SK-N-SH (cell line): ENCODE measurements at regions of chr2 and their contacts with region 1.

Region 1: GRCh38 chr2:152175458-152176325 is at the start of gene STAM2:
- DNase-seq: peak; percentile 94
- H3K4me3 ChIP-seq: peak within 1 kb of the TSS; percentile 77 to 94
- H3K27ac ChIP-seq: peak within 1 kb of the TSS; percentile 92 to 97
- H3K4me1 ChIP-seq: peaks cover 0 to 6% of the 10 kb centered on the region in 2 experiments; a peak in 2 of 4 replicates
- H3K27me3 ChIP-seq: no peaks in the 10 kb centered on the region
- CTCF ChIP-seq: peak; percentile 93
- EP300 ChIP-seq: no peak; a peak in 1 of 4 replicates
- RAD21 ChIP-seq: peak; percentile 89
- polyA plus RNA-seq, gene STAM2: 6.9 and 10.1 TPM in 2 replicates

Region 2: GRCh38 chr2:152031747-152032306 is 143.9 kb before region 1 on chr2:
- CTCF ChIA-PET with region 1: interaction called, 44 read pairs
- POLR2A ChIA-PET with region 1: interaction called, 3 read pairs
- DNase-seq: no peak
- H3K4me3 ChIP-seq: no peak overlapping the region
- H3K27ac ChIP-seq: no peak overlapping the region
- H3K4me1 ChIP-seq: no peaks in the 10 kb centered on the region
- H3K27me3 ChIP-seq: no peaks in the 10 kb centered on the region
- CTCF ChIP-seq: no peak
- EP300 ChIP-seq: no peak
- RAD21 ChIP-seq: no peak

Region 3: GRCh38 chr2:152036611-152037469 is 138.9 kb before region 1 on chr2:
- CTCF ChIA-PET with region 1: interaction called, 44 read pairs
- POLR2A ChIA-PET with region 1: no interaction called
- DNase-seq: peak; percentile 66
- H3K4me3 ChIP-seq: no peak overlapping the region; a peak in 1 of 4 replicates
- H3K27ac ChIP-seq: no peak overlapping the region
- H3K4me1 ChIP-seq: no peaks in the 10 kb centered on the region; a peak in 1 of 4 replicates
- H3K27me3 ChIP-seq: no peaks in the 10 kb centered on the region
- CTCF ChIP-seq: peak; percentile 85
- EP300 ChIP-seq: no peak
- RAD21 ChIP-seq: peak; percentile 96

Region 4: DNA sequence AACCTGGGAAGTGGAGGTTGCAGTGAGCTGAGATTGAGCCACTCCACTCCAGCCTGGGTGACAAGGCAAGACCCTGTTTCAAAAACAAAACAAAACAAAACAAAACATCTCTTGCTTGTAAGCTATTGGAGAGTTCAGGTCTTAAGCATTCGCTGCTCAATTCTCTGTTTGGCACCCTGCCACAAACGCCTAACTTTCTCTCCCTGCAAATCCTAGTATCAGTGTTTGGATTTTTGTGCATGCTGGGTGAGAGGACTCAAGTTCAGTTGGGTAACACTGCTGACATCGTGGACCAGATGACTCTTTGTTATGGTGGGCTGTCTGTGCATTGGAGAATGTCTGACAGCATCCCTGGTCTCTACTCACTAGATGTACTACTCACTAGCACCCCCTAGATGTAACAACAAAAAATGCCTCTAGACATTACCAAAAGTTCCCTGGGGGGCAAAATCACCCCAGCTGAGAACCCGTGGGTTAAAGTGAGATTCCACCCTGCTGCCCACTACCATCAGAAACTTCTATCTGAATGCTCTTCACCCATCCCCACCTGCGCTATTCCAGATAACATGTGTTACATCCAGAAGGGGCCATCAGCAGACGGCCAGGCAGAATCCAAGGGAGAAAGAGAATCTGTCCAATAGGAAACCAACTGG is 127.7 kb before region 1 on chr2:
- CTCF ChIA-PET with region 1: interaction called, 12 read pairs
- POLR2A ChIA-PET with region 1: no interaction called
- DNase-seq: peak; percentile 21
- H3K4me3 ChIP-seq: no peak overlapping the region
- H3K27ac ChIP-seq: no peak overlapping the region
- H3K4me1 ChIP-seq: peaks cover 0 to 4% of the 10 kb centered on the region in 2 experiments; a peak in 2 of 4 replicates
- H3K27me3 ChIP-seq: peaks cover 12% of the 10 kb centered on the region
- CTCF ChIP-seq: peak; percentile 52
- EP300 ChIP-seq: no peak
- RAD21 ChIP-seq: no peak

Region 5: DNA sequence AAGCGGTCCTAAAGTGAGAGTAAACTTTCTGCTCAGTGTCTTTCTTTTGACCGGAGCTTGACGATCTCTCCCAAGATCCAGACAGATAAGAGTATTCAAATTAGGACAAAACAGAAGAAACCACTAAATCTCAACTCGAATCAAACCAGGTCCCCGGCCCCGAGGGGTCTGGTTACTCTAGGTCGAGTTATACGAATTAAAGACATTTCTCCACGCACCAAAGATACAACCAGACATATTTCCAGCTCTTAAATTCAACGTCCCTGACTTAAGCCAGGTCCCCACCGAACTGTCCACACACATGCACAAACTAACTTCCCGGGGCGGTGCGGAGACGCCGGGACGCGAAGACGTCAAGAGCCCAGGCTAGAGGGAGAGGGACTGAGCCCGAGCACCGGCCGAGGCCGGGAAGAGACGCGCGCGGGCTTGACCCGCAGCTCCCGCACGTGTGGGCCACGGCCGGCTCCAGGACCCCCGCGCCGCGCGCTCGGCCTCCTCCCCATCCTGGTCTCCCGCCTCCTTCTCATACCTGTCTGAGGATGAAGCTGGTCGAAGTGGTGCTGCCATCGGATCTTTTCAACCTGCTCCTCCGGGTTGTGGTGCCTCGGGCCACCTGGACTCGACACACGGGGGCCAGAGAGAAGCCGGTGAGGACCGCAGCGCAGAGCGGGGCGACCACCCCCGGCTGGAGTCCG is 77.7 kb before region 1 on chr2:
- CTCF ChIA-PET with region 1: no interaction called
- POLR2A ChIA-PET with region 1: no interaction called
- DNase-seq: no peak
- H3K4me3 ChIP-seq: peak overlapping the region; percentile 49 to 61
- H3K27ac ChIP-seq: no peak overlapping the region
- H3K4me1 ChIP-seq: peaks cover 0 to 20% of the 10 kb centered on the region in 2 experiments; a peak in 2 of 4 replicates
- H3K27me3 ChIP-seq: peaks cover 34% of the 10 kb centered on the region
- CTCF ChIP-seq: no peak
- EP300 ChIP-seq: no peak
- RAD21 ChIP-seq: no peak

Region 6: GRCh38 chr2:152115952-152116351 is 59.7 kb before region 1 on chr2:
- CTCF ChIA-PET with region 1: interaction called, 10 read pairs
- POLR2A ChIA-PET with region 1: no interaction called
- DNase-seq: no peak
- H3K4me3 ChIP-seq: no peak overlapping the region
- H3K27ac ChIP-seq: no peak overlapping the region
- H3K4me1 ChIP-seq: no peaks in the 10 kb centered on the region
- H3K27me3 ChIP-seq: no peaks in the 10 kb centered on the region
- CTCF ChIP-seq: no peak
- EP300 ChIP-seq: no peak
- RAD21 ChIP-seq: no peak

Region 7: DNA sequence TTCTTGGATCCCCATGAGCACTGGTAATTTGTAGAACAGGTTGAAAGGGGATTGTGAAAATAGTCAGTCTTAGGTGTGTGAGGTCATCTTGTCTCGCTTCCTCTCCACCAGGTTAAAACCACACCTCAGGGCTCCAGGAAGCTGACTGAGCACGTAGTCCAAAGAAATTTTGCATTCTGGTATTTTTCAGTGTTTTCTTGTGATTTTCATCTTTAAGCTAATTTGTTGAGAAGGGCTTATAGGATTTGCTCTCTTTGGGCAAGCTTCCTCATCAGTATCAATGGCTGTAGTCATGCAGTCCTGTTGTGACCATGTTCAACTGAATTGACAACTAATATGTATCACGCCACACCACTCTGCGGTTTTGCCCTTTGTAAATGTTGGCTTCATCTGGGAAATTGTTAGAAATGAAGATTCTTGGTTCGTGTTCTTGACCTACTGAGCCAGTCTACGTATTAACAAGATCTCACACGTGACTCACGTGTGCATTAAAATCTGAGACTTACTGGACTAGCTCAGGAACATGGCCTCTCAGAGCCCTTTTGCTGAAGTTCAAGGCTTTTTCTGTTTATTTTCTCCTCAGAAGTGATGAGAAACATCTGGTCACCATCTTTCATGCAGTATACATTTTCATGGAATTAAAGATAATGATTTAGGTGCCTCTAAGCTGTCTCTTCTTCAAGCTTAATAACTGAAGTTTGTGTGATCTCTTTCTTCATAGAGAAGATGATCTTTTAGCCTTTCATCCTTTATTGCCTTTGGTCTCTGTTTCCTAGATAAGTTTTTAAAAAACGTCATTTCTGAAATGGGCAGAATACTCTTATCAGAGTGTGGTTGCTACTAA is 192.1 kb after region 1 on chr2:
- CTCF ChIA-PET with region 1: no interaction called
- POLR2A ChIA-PET with region 1: no interaction called
- DNase-seq: no peak
- H3K4me3 ChIP-seq: no peak overlapping the region
- H3K27ac ChIP-seq: no peak overlapping the region; a peak in 1 of 4 replicates
- H3K4me1 ChIP-seq: peaks cover 14 to 19% of the 10 kb centered on the region in 2 experiments; a peak in 3 of 4 replicates
- H3K27me3 ChIP-seq: no peaks in the 10 kb centered on the region
- CTCF ChIP-seq: no peak
- EP300 ChIP-seq: no peak
- RAD21 ChIP-seq: no peak

Region 8: GRCh38 chr2:152627351-152627957 is 451.8 kb after region 1 on chr2:
- CTCF ChIA-PET with region 1: interaction called, 15 read pairs
- POLR2A ChIA-PET with region 1: no interaction called
- DNase-seq: peak; percentile 48
- H3K4me3 ChIP-seq: no peak overlapping the region; a peak in 1 of 4 replicates
- H3K27ac ChIP-seq: peak overlapping the region in 1 of 2 experiments; percentile 34; a peak in 1 of 4 replicates
- H3K4me1 ChIP-seq: peaks cover 5% of the 10 kb centered on the region in 2 experiments; a peak in 3 of 4 replicates
- H3K27me3 ChIP-seq: no peaks in the 10 kb centered on the region
- CTCF ChIP-seq: peak; percentile 84
- EP300 ChIP-seq: no peak
- RAD21 ChIP-seq: peak; percentile 85